AG04450 (cell line): ENCODE measurements at regions of chr15 and their contacts with region 1.

Region 1: DNA sequence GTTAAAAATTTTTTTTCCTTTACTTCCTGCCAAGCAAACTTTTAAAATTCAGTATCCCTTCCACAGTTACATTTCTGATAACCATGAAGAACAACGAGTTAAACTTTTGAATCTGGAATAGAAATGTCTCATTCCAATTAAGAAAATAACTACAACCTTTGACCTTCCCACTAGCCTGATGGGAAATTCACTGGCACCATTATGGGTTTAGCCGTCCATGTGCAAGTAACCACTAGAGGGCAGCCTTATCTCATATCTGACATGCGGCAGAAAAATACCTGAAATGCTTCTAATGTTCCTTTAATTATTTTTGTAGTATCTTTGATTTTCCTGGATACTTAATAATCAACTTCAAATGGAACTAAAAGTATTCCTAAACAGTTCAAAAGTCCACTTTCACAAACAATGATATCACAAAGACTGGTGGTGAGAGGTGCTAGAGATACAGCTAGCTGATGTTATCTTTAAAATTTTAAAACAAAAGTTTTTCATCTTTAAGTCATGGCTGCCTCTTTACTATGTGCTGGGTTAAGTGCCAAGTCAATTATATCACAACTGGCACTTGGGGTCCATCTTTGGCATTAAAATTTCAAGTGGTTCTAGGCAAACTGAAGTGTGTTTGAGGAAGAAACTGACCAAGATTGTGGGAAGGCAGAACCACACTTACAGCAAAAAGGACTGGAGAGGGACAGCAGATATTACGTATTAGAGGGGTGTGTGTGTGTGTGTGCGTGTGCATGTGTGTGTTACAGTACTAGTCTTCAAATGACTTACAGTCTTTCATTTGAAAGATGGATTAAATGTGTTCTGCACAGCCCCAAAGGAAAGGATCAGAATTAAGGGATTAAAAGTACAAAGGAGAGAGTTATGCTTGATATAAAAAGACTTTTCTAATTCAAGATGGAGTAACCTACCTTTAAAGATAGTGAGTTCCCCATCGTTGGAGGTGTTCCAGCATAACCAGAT is 107.1 kb upstream of the ICE2 start:
- DNase-seq: peak; percentile 36
- H3K4me3 ChIP-seq: no peak overlapping the region
- H3K27ac ChIP-seq: no peak overlapping the region
- H3K27me3 ChIP-seq: no peaks in the 10 kb centered on the region
- CTCF ChIP-seq: peak; percentile 94

Region 2: DNA sequence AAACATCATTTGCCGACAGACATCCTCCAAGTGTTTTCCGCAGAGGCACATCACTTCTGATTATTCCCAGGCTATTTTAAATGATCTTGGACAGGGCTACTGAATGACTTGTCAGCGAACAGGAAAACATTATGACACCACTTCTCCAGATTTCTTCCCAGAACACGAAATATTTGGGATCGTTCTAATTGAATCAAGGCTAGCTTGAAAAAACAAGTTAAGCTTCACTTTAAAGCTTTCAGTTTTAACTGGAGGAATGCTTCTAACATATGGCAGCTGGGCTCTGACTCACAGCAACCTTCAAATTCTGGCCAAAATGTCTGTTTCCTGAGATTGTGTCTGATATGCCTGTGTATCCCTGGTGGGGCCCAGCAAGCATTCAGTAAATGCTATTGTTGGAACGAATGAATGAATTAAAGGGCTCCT is 19.9 kb after region 1 on chr15:
- CTCF ChIA-PET with region 1: interaction called, 15 read pairs
- POLR2A ChIA-PET with region 1: no interaction called
- DNase-seq: peak; percentile 27
- H3K4me3 ChIP-seq: peak overlapping the region; percentile 43
- H3K27ac ChIP-seq: no peak overlapping the region
- H3K27me3 ChIP-seq: peaks cover 8% of the 10 kb centered on the region
- CTCF ChIP-seq: no peak

Region 3: DNA sequence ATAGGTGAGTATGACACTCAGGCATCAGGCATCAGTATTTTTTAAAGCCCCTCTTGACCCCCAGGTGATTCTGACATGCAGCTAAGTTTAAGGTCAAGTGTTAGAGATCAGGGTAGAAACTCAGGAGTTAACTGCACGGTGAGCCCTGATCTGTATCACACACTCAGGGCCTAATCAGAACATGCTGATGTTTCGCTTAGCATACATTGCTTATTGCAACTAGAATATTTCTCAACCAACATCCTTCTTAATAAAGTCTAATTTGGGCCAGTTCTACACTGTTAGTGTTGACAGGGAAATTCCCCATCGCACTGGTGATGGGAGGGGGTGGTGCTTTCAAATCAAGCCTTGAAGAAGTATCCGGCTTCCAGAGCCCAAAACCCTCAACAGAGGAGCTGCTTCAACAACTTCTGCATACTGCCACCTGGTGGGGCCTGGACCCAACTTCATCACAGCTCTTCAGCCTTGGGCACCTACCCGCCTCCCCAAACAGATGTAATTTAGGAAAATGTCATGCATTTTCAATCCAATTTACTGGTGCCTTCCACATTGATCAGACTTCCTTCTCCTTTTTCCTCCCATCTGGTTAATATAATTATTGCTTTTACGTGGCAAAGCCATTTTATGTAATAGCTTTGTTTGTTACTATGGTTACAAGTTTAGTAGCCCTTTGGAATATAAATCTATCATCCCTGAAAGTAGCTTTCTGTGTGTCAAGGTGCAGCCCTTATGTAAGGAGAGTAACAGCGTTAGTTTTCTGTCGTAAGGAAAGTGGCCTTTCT is 330.8 kb after region 1 on chr15:
- CTCF ChIA-PET with region 1: interaction called, 203 read pairs
- POLR2A ChIA-PET with region 1: no interaction called
- DNase-seq: peak; percentile 54
- H3K4me3 ChIP-seq: no peak overlapping the region
- H3K27ac ChIP-seq: no peak overlapping the region
- H3K27me3 ChIP-seq: peaks cover 7% of the 10 kb centered on the region
- CTCF ChIP-seq: peak; percentile 83

Region 4: DNA sequence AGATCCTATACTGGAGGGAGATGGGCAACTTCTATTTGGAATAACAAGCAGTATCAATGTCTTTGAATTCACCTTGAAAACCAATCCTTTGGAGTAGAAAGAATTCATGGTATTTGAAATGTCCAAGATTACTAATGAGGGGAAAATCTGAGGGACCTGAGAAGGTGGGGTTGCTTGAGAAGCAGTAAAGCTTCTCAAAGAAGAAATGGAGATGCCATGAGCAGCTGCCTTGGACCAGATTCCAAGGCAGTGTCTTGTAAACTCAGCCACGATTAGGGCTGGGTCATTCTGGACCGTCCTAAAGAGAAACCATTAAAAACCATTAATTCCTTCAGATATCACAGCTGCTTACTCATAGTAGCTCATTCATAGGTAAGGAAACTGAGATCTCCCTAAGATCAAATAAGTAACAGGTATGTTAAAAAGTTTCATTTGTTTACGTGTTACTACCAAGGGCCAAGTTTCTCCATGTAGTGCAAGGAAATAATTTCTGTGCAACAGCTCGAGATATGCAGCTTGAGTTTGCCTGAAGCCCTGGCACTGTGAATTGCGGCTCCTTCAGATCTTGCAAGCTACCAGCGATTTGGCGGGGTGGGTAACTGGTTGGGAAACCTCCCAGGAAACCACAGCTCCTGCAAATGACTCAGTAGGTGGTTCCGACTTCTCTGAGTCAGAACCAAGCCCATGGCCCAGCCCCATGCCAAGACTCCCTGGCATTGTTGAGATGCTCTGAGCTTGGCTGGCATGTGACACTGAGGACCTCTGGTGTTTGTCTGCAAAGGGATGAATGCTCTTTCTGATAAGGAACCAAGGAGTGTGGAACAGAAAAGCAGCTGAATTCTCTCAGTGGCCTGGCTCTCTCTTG is 346.3 kb after region 1 on chr15:
- CTCF ChIA-PET with region 1: interaction called, 12 read pairs
- POLR2A ChIA-PET with region 1: no interaction called
- DNase-seq: no peak
- H3K4me3 ChIP-seq: no peak overlapping the region
- H3K27ac ChIP-seq: no peak overlapping the region
- H3K27me3 ChIP-seq: no peaks in the 10 kb centered on the region
- CTCF ChIP-seq: no peak

Region 5: DNA sequence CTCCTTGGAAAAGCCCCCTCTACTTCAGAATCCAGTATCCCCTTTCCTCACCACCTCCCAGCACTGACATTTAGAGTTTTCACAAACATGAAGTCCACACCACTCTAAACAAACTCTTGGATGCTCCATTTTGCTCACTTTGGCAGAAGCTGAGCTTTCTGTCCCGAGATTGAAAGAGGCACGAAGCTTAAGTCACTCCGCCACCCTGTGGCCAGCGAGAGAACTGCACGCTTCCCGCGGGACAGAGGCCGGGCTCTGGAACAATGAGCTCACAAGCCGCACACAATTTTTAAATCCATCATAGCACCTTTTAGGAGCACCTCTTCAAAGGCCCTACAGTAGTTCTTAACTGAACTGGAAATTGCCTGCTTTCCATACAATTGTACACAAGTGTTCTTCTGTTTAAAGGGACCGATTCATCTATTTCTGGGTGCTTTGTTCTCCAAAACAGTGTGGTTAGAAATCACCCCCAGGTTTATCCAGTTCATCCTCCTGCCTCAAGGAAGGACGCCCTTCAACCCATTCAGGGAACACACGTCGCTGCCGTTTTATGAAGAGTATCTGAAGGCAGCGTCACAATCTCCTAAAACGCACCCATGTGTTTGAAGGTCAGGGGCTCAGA is 1248.2 kb after region 1 on chr15:
- CTCF ChIA-PET with region 1: interaction called, 28 read pairs
- POLR2A ChIA-PET with region 1: no interaction called
- DNase-seq: peak; percentile 47
- H3K4me3 ChIP-seq: no peak overlapping the region
- H3K27ac ChIP-seq: no peak overlapping the region
- H3K27me3 ChIP-seq: peaks cover 8% of the 10 kb centered on the region
- CTCF ChIP-seq: peak; percentile 95